MCF 10A (cell line): ENCODE measurements at regions of chr5 and their contacts with region 1.

Region 1: GRCh38 chr5:36264202-36264760 is 22.6 kb upstream of the NADK2 start:
- DNase-seq: no peak
- H3K4me3 Mint-ChIP-seq: no peak overlapping the region
- H3K27ac Mint-ChIP-seq: no peak overlapping the region
- H3K4me1 Mint-ChIP-seq: no peaks in the 10 kb centered on the region
- H3K27me3 Mint-ChIP-seq: peaks cover 14% of the 10 kb centered on the region
- CTCF ChIP-seq: no peak

Region 2: DNA sequence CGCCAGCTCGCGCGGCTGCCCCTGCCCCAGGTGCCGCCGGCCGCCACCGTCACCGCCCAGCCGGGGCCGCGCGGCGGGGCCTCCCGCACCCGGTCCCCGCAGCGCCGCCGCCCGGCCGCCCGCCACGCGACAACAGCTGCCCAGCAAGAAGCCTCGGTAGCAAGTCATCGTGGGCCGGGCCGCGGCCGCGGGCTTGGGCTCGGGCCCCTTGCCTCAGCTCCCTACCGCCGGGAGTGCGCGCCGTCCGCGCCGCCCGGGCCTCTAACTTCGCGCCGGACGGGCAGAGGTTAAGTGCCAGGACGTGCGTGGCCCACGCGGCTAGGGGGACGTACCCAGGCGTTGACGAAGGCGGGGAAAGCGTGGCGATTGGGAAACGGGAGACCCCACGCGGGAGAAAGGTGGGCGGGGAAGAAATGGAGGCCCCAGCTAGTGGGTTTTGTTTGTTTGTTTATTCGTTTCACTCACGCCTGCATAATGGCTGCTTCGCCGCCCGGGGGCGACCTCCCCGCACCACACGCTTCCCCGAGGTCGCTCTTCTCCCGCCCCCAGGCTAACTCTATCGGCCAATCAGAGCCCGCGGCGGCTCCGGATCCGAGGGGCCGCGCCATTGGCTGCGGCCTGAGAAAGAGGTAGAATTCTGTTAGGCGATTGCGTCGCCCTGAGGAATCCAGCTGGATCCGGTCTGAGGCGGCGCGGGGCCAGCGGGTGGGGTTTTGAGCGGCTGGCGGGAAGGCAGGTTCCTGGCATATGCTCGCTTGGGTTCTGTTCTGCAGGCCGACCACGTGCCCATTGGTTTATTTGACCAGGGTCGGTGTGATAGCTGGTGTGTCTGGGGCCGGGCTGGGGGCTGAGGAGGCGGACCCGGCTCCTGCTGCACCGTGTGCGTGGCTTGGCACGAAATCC is 22.4 kb before region 1 on chr5 and contains the start of gene NADK2:
- CTCF ChIA-PET with region 1: interaction called, 13 read pairs
- POLR2A ChIA-PET with region 1: interaction called, 3 read pairs
- intact Hi-C with region 1: no loop called
- DNase-seq: peak; percentile 97
- H3K4me3 Mint-ChIP-seq: peak within 1 kb of the TSS; percentile 86
- H3K27ac Mint-ChIP-seq: peak within 1 kb of the TSS; percentile 98
- H3K4me1 Mint-ChIP-seq: peaks cover 35% of the 10 kb centered on the region
- H3K27me3 Mint-ChIP-seq: no peaks in the 10 kb centered on the region
- CTCF ChIP-seq: peak; percentile 55
- total RNA-seq, gene NADK2: 36.2 and 37.1 TPM in 2 replicates

Region 3: GRCh38 chr5:36276864-36277263 is 12.6 kb after region 1 on chr5:
- CTCF ChIA-PET with region 1: interaction called, 12 read pairs
- POLR2A ChIA-PET with region 1: interaction called, 3 read pairs
- intact Hi-C with region 1: no loop called
- DNase-seq: no peak
- H3K4me3 Mint-ChIP-seq: no peak overlapping the region
- H3K27ac Mint-ChIP-seq: no peak overlapping the region
- H3K4me1 Mint-ChIP-seq: no peaks in the 10 kb centered on the region
- H3K27me3 Mint-ChIP-seq: no peaks in the 10 kb centered on the region
- CTCF ChIP-seq: no peak

Region 4: DNA sequence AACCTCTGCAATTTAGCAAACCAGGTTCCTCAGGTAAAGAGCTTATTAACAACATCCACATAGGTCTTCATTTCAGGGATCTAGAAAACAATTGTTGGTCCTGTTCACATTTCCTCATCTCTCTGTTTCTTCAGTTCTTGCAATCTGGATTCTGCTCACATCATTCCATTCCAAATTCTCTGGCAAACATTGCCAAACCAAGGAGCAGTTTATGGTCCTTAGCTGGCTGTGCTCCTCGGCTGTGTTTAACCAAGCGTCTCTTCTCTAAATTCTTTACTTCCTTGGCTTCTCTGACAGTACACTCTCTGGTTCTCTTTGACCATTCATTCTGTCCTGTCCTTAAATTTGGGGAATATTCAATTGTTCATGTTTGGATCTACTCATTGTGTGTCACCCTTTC is 103.2 kb after region 1 on chr5:
- CTCF ChIA-PET with region 1: interaction called, 11 read pairs
- POLR2A ChIA-PET with region 1: no interaction called
- intact Hi-C with region 1: no loop called
- DNase-seq: no peak
- H3K4me3 Mint-ChIP-seq: no peak overlapping the region
- H3K27ac Mint-ChIP-seq: peak overlapping the region; percentile 72
- H3K4me1 Mint-ChIP-seq: peaks cover 37% of the 10 kb centered on the region
- H3K27me3 Mint-ChIP-seq: no peaks in the 10 kb centered on the region
- CTCF ChIP-seq: no peak

Region 5: DNA sequence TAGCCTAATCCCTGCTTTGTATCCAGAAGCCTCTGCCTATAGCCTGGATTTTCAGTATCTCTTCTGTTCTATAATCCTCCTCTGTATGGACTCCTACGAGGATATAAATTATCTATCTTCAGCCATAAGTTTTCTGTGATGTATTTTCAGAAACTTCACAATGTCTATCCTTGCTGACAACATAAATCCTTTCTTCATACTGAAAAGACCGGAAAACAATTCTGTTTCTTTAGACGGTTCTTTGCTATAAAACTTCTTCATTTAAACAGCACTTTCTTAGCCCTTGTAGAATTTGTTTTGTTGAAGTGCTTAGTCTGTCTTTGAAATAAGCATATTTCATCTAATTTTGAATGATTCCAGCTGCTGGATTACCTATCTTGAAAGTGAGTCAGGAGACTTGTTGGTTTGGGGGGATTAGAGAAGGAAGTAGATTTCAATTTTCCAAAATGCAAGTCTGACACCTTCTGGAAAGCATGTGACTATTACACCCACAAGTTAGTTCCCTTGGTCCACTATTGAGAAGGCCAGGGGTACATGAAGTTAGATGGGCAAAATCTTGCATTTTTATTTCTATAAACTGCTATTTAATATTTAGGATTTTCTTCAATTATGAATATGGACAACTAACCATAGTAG is 133.7 kb after region 1 on chr5:
- CTCF ChIA-PET with region 1: interaction called, 19 read pairs
- POLR2A ChIA-PET with region 1: no interaction called
- intact Hi-C with region 1: loop called (anchors 1 kb)
- DNase-seq: peak; percentile 47
- H3K4me3 Mint-ChIP-seq: no peak overlapping the region
- H3K27ac Mint-ChIP-seq: no peak overlapping the region
- H3K4me1 Mint-ChIP-seq: peaks cover 5% of the 10 kb centered on the region
- H3K27me3 Mint-ChIP-seq: no peaks in the 10 kb centered on the region
- CTCF ChIP-seq: peak; percentile 47

Region 6: GRCh38 chr5:36690041-36690961 is 426.0 kb after region 1 on chr5:
- CTCF ChIA-PET with region 1: interaction called, 34 read pairs
- POLR2A ChIA-PET with region 1: no interaction called
- intact Hi-C with region 1: loop called (anchors 2 kb)
- DNase-seq: peak; percentile 89
- H3K4me3 Mint-ChIP-seq: peak overlapping the region; percentile 71
- H3K27ac Mint-ChIP-seq: peak overlapping the region; percentile 21
- H3K4me1 Mint-ChIP-seq: peaks cover 14% of the 10 kb centered on the region
- H3K27me3 Mint-ChIP-seq: no peaks in the 10 kb centered on the region
- CTCF ChIP-seq: peak; percentile 62